ENCODE measurements at regions of chr18 and their contacts with region 1.

Region 1: DNA sequence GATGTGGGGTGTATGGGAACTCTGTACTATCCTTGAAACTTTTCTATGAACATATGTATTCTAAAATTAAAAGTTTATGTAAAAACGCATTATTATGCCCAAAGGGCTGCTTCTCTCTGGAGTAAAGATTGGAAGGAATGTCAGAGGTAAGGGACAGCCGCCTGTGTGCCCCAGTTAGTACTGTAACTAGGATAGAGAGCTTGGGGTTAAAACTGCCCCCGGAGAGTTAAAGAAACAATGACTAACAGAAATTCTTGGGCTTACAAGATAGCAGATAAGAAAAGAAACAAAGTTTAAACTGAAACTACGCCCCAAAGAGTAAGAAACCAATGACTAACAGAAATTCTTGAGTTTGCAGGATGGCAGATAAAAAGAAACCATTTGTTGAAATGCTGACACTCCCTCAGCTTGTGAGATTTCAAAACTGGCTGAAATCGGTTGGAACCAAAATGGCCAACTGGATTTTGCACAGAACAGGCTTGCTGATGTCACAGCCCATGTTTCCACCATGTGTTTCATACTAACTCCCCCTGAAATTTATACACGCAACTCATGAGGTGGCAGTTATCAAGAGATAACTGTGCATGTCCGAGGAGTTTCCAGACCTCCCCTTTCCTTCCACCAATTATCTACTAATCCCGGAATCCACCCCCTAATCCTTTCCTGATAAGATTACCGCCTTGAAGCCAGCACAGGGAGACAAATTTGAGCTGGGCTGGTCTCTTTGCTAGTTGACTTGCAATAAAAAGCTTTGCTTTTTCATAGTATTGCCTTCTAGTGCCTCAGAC is 8.7 kb upstream of the TXNDC2 start:
- DNase-seq: peak; percentile 57
- ATAC-seq: peak; percentile 90 to 93

Region 2: DNA sequence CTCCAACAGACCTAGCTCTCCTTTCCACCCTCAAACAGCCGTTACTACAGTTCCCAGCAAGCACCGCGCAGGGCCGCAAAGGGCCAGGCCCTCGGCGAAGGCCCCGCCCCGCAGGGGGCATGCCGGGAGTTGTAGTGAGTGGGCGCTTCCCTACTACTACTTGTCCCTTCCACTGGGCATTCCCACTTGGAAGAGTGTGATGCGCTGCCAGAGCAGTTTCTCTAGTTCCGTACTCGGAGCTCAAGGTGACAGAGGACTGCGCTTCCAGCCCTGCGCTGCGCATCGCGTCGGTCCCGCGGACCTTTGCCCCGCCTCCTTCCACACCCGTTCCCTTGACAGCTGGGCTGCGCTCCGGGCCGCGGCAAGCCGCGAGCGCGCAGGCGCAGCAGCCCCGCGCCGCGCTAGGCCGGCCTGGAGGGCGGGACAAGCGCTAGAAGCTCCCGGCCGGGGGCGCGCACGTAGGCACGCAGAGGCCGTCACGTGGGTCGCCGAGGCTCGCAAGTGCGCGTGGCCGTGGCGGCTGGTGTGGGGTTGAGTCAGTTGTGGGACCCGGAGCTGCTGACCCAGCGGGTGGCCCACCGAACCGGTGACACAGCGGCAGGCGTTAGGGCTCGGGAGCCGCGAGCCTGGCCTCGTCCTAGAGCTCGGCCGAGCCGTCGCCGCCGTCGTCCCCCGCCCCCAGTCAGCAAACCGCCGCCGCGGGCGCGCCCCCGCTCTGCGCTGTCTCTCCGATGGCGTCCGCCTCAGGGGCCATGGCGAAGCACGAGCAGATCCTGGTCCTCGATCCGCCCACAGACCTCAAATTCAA is 36.7 kb after region 1 on chr18 and contains the start of gene VAPA:
- intact Hi-C with region 1: loop called in 1 of 2 experiments (anchors 5 kb)
- DNase-seq: peak; percentile 97
- ATAC-seq: peak; percentile 96 to 97
- total RNA-seq, gene VAPA: 169 to 219 TPM

Measured in left cardiac atrium (tissue), 4 donors.